ENCODE measurements at regions of chr17 and their contacts with region 1.

Region 1: DNA sequence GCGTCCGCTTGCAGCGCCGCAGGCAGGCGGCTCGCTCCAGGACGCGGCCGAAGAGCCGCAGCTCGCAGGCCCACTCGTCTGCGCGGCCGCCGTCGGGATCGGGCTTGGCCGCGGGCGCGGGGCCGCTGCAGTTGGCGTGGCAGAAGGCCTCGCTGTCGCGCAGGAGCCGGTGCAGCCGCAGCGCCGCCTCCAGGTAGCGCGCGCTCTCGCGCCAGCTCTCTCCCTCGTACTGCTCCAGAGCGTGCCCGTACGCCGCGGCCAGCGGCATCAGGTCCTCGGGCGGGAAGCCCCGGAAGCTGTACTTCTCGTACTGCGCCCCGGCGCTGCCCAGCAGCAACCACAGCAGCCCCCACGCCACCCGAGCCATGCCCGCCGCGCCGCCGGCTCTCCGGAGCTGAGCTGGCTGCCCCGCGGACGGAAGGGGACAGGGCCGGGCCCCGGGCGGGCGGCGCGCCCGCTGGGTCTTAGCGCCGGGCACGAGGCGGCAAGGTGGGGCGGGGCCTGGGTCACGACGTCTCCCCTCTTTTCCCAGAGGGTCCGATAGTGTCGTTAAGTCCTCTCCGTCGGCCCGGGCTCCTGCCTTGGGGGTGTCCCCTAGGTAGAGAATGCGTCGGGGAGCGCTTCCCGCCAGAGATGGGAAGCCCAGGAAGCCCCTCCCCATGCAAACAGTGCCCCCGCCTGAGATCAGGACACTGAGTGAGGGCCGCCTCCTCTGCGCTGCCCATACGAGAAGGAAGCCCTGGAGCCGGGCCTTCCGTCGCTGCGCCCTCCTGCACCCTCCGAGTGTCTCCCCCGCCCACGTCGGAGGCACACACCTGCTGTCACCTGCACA is at the start of gene P3H4:
- DNase-seq: peak; percentile 78
- ATAC-seq: peak; percentile 44
- H3K4me3 Mint-ChIP-seq: peak within 1 kb of the TSS; percentile 98
- H3K27ac Mint-ChIP-seq: peak within 1 kb of the TSS; percentile 95
- H3K4me1 Mint-ChIP-seq: peaks cover 24% of the 10 kb centered on the region
- H3K27me3 Mint-ChIP-seq: peaks cover 7% of the 10 kb centered on the region
- CTCF ChIP-seq: peak; percentile 40; the same call in 1 of the 2 replicates
- total RNA-seq, gene P3H4: 32.1 to 34.6 TPM (median 33.5 TPM) in 3 replicates

Region 2: DNA sequence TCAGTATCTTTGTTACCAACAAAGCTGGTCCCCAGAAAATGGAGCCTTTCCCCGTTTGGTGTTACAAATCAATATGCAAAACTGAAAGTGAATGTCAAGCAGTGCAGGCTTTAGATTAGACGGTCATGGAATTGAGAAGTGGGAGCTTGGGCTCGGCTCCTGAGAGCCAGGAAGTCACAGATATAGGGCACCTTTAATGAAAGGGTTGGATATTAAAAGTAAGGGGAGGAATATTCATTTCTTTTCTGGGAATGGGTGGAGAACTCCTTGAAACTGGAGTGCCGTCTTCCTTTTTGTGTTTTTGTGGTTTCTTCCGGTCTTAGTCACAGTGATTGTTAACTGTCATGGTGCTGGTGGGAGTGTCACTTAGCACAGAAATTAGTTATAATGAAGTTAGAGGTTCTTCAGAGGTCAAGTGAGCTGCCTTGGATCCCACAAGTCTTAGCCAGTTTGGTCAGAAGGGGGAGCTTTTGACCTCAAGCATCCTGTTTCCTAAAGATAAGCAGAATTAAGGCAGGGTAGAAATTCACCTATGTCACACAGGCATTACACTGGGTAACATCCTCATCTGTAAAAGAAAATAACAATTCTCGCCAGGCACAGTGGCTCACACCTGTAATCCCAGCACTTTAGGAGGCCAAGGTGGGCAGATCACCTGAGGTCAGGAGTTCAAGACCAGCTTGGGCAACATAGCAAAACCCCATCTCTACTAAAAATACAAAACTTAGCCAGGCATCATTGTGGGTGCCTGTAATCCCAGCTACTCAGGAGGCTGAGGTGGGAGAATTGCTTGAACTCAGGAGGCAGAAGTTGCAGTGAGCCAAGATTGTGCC is 132.6 kb before region 1 on chr17:
- CTCF ChIA-PET with region 1: no interaction called
- POLR2A ChIA-PET with region 1: no interaction called
- DNase-seq: no peak
- ATAC-seq: peak; percentile 48
- H3K4me3 Mint-ChIP-seq: no peak overlapping the region
- H3K27ac Mint-ChIP-seq: peak overlapping the region; percentile 50; the same call in 1 of the 2 replicates
- H3K4me1 Mint-ChIP-seq: peaks cover 50% of the 10 kb centered on the region
- H3K27me3 Mint-ChIP-seq: peaks cover 2% of the 10 kb centered on the region; the same call in 1 of the 2 replicates
- CTCF ChIP-seq: no peak

Region 3: GRCh38 chr17:41738077-41738735 is 73.6 kb before region 1 on chr17:
- CTCF ChIA-PET with region 1: interaction called, 15 read pairs
- POLR2A ChIA-PET with region 1: interaction called, 5 read pairs
- DNase-seq: peak; percentile 91
- ATAC-seq: peak; percentile 71
- H3K4me3 Mint-ChIP-seq: no peak overlapping the region
- H3K27ac Mint-ChIP-seq: peak overlapping the region; percentile 82
- H3K4me1 Mint-ChIP-seq: peaks cover 22% of the 10 kb centered on the region
- H3K27me3 Mint-ChIP-seq: peaks cover 47% of the 10 kb centered on the region
- CTCF ChIP-seq: peak; percentile 98

Region 4: GRCh38 chr17:41777574-41778188 is 34.1 kb before region 1 on chr17:
- CTCF ChIA-PET with region 1: interaction called, 11 read pairs
- POLR2A ChIA-PET with region 1: no interaction called
- DNase-seq: no peak
- ATAC-seq: no peak
- H3K4me3 Mint-ChIP-seq: no peak overlapping the region
- H3K27ac Mint-ChIP-seq: peak overlapping the region; percentile 70; the same call in 1 of the 2 replicates
- H3K4me1 Mint-ChIP-seq: peaks cover 64% of the 10 kb centered on the region
- H3K27me3 Mint-ChIP-seq: no peaks in the 10 kb centered on the region
- CTCF ChIP-seq: no peak

Region 5: GRCh38 chr17:41801374-41802271 is 10.1 kb before region 1 on chr17:
- CTCF ChIA-PET with region 1: interaction called, 46 read pairs
- POLR2A ChIA-PET with region 1: interaction called, 7 read pairs
- DNase-seq: peak; percentile 94
- ATAC-seq: peak; percentile 54
- H3K4me3 Mint-ChIP-seq: peak overlapping the region; percentile 66
- H3K27ac Mint-ChIP-seq: peak overlapping the region; percentile 97
- H3K4me1 Mint-ChIP-seq: peaks cover 26% of the 10 kb centered on the region
- H3K27me3 Mint-ChIP-seq: no peaks in the 10 kb centered on the region
- CTCF ChIP-seq: peak; percentile 97

Region 6: GRCh38 chr17:41864836-41865595 is 53.3 kb after region 1 on chr17 and contains the start of gene KLHL11:
- CTCF ChIA-PET with region 1: interaction called, 20 read pairs
- POLR2A ChIA-PET with region 1: interaction called, 8 read pairs
- DNase-seq: peak; percentile 91
- ATAC-seq: peak; percentile 88
- H3K4me3 Mint-ChIP-seq: no peak within 1 kb of the TSS; the same call in 1 of the 2 replicates
- H3K27ac Mint-ChIP-seq: peak within 1 kb of the TSS; percentile 97
- H3K4me1 Mint-ChIP-seq: peaks cover 23% of the 10 kb centered on the region
- H3K27me3 Mint-ChIP-seq: no peaks in the 10 kb centered on the region
- CTCF ChIP-seq: no peak
- total RNA-seq, gene KLHL11: 13.4 to 15.0 TPM (median 14.7 TPM) in 3 replicates